ENCODE measurements at regions of chr21 and their contacts with region 1.

Region 1: DNA sequence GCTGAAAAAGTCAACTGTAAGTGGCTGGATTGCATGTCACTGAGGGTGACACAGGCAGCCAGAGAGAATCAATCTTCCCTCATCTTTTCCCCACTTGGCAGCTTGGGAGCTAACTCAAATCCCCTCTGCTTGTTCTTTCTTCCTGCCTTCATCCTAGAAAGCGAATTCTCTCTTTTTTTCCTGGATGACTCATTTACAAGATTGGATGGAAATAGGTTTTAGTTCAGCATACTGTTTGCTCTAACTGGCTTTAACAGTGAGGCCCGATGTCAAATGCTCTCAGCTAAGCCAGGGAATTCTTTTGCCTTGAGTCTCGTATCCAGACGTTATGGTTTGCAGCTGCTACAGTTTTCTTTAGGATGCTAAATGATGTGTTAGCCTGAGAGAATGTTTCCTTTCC is 72.7 kb downstream of the HUNK start:
- DNase-seq: peak; percentile 75
- H3K4me3 ChIP-seq: no peak overlapping the region
- H3K27me3 ChIP-seq: no peaks in the 10 kb centered on the region
- CTCF ChIP-seq: no peak

Region 2: GRCh38 chr21:31931644-31932639 is 13.6 kb before region 1 on chr21:
- CTCF ChIA-PET with region 1: interaction called, 10 read pairs
- POLR2A ChIA-PET with region 1: no interaction called
- DNase-seq: no peak
- H3K4me3 ChIP-seq: no peak overlapping the region
- H3K27me3 ChIP-seq: no peaks in the 10 kb centered on the region; the same call in 1 of the 2 replicates
- CTCF ChIP-seq: no peak

Region 3: DNA sequence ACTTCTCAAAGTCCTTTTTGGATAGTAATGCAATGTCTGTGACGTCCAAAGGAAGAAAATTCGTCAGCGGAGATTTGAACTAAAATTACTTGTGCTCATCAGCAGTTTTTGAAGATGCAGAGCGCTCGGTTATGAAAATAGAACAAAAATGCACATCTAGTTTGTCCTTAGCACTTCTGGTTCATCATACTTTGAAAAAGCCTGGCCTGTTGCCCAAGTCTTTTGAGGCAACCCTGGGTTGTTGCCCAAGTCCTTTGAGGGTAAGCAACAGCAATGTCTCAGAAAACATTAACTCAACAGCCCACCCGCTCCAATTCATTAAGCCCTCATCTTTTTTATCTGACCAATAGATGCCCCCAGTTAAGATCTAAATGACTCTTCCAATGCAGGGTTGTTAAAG is 19.1 kb after region 1 on chr21:
- CTCF ChIA-PET with region 1: no interaction called
- POLR2A ChIA-PET with region 1: no interaction called
- DNase-seq: no peak
- H3K4me3 ChIP-seq: no peak overlapping the region
- H3K27me3 ChIP-seq: no peaks in the 10 kb centered on the region
- CTCF ChIP-seq: no peak